HCT116 (cell line): ENCODE measurements at regions of chr11 and their contacts with region 1.

Region 1: GRCh38 chr11:117807482-117808327 is 10.7 kb upstream of the DSCAML1 start:
- DNase-seq: peak; percentile 38
- ATAC-seq: peak; percentile 63
- H3K4me3 ChIP-seq: no peak overlapping the region
- H3K27ac ChIP-seq: no peak overlapping the region
- H3K4me1 ChIP-seq: peaks cover 6 to 13% of the 10 kb centered on the region in 2 experiments; a peak in 3 of 4 replicates
- H3K27me3 ChIP-seq: no peaks in the 10 kb centered on the region
- CTCF ChIP-seq: peak; percentile 79 to 93 (median 93)
- POLR2A ChIP-seq: no peak
- RAD21 ChIP-seq: peak; percentile 88

Region 2: DNA sequence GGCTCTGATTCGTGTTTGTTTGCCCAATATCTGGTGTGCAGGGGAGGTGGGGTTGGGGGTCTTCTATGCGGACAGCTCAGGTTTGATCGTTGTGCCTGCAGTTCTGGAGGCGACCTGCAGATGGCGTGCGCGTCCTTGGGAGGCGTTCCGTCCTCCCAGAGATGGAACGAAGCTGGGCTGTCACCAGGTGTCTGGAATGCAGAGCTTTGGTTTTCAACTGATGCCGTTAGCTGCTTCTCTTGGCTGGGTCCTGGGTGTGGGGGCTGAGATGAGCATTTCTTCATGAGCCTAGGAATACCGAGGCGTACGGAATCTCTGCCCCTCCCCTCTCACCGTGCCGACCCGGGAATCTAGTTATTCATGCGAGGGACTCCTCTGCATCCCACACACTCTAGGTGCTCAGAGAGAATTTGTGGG is 381.4 kb before region 1 on chr11:
- CTCF ChIA-PET with region 1: interaction called, 77 read pairs
- POLR2A ChIA-PET with region 1: interaction called, 3 read pairs
- RAD21 ChIA-PET with region 1: interaction called, 7 to 16 read pairs
- intact Hi-C with region 1: loop called (anchors 2 kb)
- DNase-seq: peak; percentile 21
- ATAC-seq: peak; percentile 92
- H3K4me3 ChIP-seq: no peak overlapping the region
- H3K27ac ChIP-seq: no peak overlapping the region
- H3K4me1 ChIP-seq: no peaks in the 10 kb centered on the region
- H3K27me3 ChIP-seq: no peaks in the 10 kb centered on the region
- CTCF ChIP-seq: peak; percentile 79 to 98 (median 98)
- POLR2A ChIP-seq: no peak
- RAD21 ChIP-seq: peak; percentile 87

Region 3: GRCh38 chr11:117443266-117444195 is 364.2 kb before region 1 on chr11:
- CTCF ChIA-PET with region 1: interaction called, 14 read pairs
- POLR2A ChIA-PET with region 1: no interaction called
- RAD21 ChIA-PET with region 1: no interaction called
- intact Hi-C with region 1: loop called (anchors 2 kb)
- DNase-seq: no peak
- ATAC-seq: peak; percentile 81
- H3K4me3 ChIP-seq: no peak overlapping the region
- H3K27ac ChIP-seq: no peak overlapping the region
- H3K4me1 ChIP-seq: no peaks in the 10 kb centered on the region
- H3K27me3 ChIP-seq: peaks cover 43% of the 10 kb centered on the region; the same call in 1 of the 2 replicates
- CTCF ChIP-seq: peak; percentile 39 to 54 (median 45); a peak in 5 of 6 replicates
- POLR2A ChIP-seq: no peak
- RAD21 ChIP-seq: peak; percentile 73

Region 4: GRCh38 chr11:118051611-118052461 is 244.1 kb after region 1 on chr11:
- CTCF ChIA-PET with region 1: interaction called, 35 read pairs
- POLR2A ChIA-PET with region 1: no interaction called
- RAD21 ChIA-PET with region 1: interaction called, 5 to 6 read pairs
- intact Hi-C with region 1: loop called (anchors 1 kb)
- DNase-seq: no peak
- ATAC-seq: no peak
- H3K4me3 ChIP-seq: no peak overlapping the region
- H3K27ac ChIP-seq: no peak overlapping the region
- H3K4me1 ChIP-seq: peaks cover 0 to 6% of the 10 kb centered on the region in 2 experiments; a peak in 2 of 4 replicates
- H3K27me3 ChIP-seq: no peaks in the 10 kb centered on the region; the same call in 1 of the 2 replicates
- CTCF ChIP-seq: no peak
- POLR2A ChIP-seq: no peak
- RAD21 ChIP-seq: no peak

Region 5: GRCh38 chr11:118171269-118172062 is 363.8 kb after region 1 on chr11:
- CTCF ChIA-PET with region 1: interaction called, 16 read pairs
- POLR2A ChIA-PET with region 1: no interaction called
- RAD21 ChIA-PET with region 1: no interaction called
- intact Hi-C with region 1: loop called (anchors 5 kb)
- DNase-seq: no peak
- ATAC-seq: peak; percentile 93
- H3K4me3 ChIP-seq: no peak overlapping the region
- H3K27ac ChIP-seq: no peak overlapping the region
- H3K4me1 ChIP-seq: peaks cover 0 to 7% of the 10 kb centered on the region in 2 experiments; a peak in 1 of 4 replicates
- H3K27me3 ChIP-seq: no peaks in the 10 kb centered on the region
- CTCF ChIP-seq: peak; percentile 81 to 93 (median 82)
- POLR2A ChIP-seq: no peak
- RAD21 ChIP-seq: peak; percentile 95

Region 6: DNA sequence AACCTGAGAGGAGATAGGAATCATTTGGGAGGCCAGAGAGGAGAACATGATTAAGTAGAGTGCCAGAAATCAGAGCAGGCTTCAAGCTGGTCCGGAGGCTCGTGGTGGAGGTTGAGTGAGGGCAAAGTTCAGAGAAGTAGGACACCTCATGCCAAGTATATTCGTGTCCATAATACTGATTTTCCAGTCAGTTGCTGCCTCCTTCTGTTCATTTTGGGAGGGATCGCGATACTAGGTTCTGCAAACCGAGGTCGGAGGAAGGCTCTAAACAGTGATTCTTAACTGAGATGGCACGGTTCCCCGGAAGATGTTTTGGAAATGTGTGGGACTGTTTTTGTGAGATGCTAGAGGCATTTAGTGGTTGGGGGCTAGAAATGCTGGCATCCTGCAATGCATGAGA is 483.2 kb after region 1 on chr11:
- CTCF ChIA-PET with region 1: interaction called, 3 read pairs
- POLR2A ChIA-PET with region 1: no interaction called
- RAD21 ChIA-PET with region 1: no interaction called
- intact Hi-C with region 1: loop called (anchors 5 kb)
- DNase-seq: peak; percentile 51
- ATAC-seq: peak; percentile 88
- H3K4me3 ChIP-seq: peak overlapping the region; percentile 10 to 22; a peak in 3 of 4 replicates
- H3K27ac ChIP-seq: no peak overlapping the region
- H3K4me1 ChIP-seq: peaks cover 10 to 27% of the 10 kb centered on the region in 2 experiments; a peak in 3 of 4 replicates
- H3K27me3 ChIP-seq: no peaks in the 10 kb centered on the region
- CTCF ChIP-seq: peak; percentile 48 to 95 (median 59)
- POLR2A ChIP-seq: no peak
- RAD21 ChIP-seq: peak; percentile 99

Region 7: DNA sequence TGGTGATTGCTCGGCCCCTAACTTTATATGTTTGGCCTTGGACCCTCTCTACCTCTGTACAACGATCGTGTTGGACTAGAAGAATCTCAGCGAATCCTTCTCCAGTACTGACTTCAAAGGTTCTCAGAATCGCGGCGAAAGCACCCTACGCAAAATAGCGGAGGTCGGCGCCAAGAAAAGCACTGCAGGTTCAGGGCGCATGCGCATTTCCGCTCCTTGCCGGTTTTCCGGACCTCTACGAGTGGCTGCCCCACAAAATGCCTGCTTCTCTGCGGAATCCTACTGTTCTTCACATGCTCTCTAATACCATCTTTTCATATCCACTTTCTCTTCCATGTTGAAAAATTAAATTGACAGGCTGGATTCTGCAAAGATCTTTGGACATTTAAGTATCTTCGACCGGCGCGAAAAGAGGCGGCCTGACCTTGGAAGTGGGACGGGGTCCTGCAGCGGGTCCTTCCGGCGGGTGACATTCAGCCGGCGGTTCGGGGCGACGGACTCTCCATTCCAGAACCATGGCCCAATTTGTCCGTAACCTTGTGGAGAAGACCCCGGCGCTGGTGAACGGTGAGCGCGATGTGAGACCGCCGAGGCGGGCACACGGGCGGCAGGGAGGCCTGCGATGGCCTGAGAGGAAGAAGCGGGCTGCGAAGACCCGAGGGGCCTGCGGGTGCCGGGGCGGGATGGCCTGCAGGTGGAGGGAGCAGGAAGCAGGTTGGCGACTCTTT is 593.6 kb after region 1 on chr11 and contains the start of gene ATP5MG:
- CTCF ChIA-PET with region 1: no interaction called
- POLR2A ChIA-PET with region 1: no interaction called
- RAD21 ChIA-PET with region 1: no interaction called
- intact Hi-C with region 1: no loop called
- DNase-seq: peak; percentile 81
- ATAC-seq: peak; percentile 80
- H3K4me3 ChIP-seq: peak within 1 kb of the TSS; percentile 64 to 87
- H3K27ac ChIP-seq: peak within 1 kb of the TSS; percentile 75
- H3K4me1 ChIP-seq: peaks cover 10 to 20% of the 10 kb centered on the region in 2 experiments; a peak in 3 of 4 replicates
- H3K27me3 ChIP-seq: no peaks in the 10 kb centered on the region
- CTCF ChIP-seq: no peak; a peak in 1 of 6 replicates
- POLR2A ChIP-seq: peak; percentile 84
- RAD21 ChIP-seq: peak; percentile 5; the same call in 1 of the 2 replicates
- total RNA-seq, gene ATP5MG: 205 TPM